Calu3 (cell line): ENCODE measurements at regions of chr3 and their contacts with region 1.

Region 1: GRCh38 chr3:82802501-82802900 is 1041.1 kb upstream of the GBE1 start:
- DNase-seq: no peak
- H3K4me3 Mint-ChIP-seq: no peak overlapping the region
- H3K27ac Mint-ChIP-seq: no peak overlapping the region
- H3K4me1 Mint-ChIP-seq: no peaks in the 10 kb centered on the region
- H3K27me3 Mint-ChIP-seq: no peaks in the 10 kb centered on the region
- CTCF ChIP-seq: no peak

Region 2: DNA sequence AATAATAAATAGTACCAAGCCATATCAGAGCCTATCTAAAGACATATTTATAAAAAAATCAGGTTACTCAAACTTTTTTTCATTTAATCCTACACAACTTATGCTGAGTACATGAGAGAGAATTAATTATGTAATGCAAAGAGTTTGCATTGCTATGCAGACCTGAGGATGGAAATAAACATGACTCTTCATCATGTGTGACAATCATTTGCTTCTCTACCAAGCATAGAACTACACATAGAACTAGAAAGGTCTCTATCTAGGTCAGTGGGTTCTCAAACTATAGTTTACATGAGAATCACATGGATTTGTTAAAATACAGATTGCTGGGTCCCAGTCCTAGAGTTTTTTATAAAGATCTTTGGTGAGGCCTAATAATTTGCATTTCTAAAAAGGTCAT is 1127.8 kb before region 1 on chr3:
- CTCF ChIA-PET with region 1: no interaction called
- intact Hi-C with region 1: loop called (anchors 5 kb)
- DNase-seq: no peak
- H3K4me3 Mint-ChIP-seq: no peak overlapping the region
- H3K27ac Mint-ChIP-seq: no peak overlapping the region
- H3K4me1 Mint-ChIP-seq: no peaks in the 10 kb centered on the region
- H3K27me3 Mint-ChIP-seq: no peaks in the 10 kb centered on the region
- CTCF ChIP-seq: no peak

Region 3: DNA sequence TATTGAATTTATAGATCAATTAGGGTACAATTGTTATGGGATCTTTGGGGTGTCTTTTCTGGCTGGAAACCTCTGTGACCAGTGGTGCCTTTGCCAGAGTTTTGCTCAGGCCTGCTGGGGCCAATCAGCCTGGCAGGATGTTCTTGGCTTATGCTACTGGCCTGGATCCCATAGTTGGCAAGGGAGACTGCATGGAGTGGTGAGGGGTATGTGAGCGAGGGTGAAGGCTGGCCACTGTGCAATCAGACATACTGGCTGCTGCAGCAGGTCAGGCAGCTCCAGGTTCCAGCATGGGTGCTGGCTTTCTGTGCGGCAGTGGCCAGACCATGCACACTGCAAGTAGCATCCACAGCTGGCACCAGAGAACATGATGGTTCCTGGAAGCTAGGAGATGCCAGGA is 12.2 kb after region 1 on chr3:
- CTCF ChIA-PET with region 1: no interaction called
- intact Hi-C with region 1: no loop called
- DNase-seq: no peak
- H3K4me3 Mint-ChIP-seq: no peak overlapping the region
- H3K27ac Mint-ChIP-seq: no peak overlapping the region
- H3K4me1 Mint-ChIP-seq: no peaks in the 10 kb centered on the region
- H3K27me3 Mint-ChIP-seq: no peaks in the 10 kb centered on the region
- CTCF ChIP-seq: no peak